Endothelial cell of umbilical vein (primary cell): ENCODE measurements at regions of chr2 and their contacts with region 1.

Region 1: DNA sequence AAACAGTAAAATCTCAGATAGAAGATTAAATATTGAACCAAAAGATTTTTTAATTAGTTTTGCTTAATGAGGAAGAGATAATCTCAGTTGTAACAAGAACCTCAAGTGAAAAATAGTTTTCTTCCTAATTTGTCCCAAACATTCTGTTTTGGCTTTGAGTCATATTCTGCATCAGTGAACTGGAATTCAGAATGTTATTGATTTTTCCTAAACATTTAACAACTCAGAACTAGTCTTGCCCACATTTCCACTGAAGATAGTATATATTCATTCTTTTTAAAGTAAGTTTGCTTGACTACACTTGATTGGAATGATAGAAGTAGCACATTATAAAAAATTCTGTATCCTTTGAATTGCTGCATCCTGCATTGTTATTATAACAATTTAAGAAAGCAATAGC is 85.7 kb upstream of the UGP2 start:
- DNase-seq: no peak
- H3K4me3 ChIP-seq: no peak overlapping the region
- H3K27ac ChIP-seq: no peak overlapping the region
- H3K4me1 ChIP-seq: no peaks in the 10 kb centered on the region
- H3K27me3 ChIP-seq: no peaks in the 10 kb centered on the region
- CTCF ChIP-seq: no peak
- POLR2A ChIP-seq: no peak

Region 2: DNA sequence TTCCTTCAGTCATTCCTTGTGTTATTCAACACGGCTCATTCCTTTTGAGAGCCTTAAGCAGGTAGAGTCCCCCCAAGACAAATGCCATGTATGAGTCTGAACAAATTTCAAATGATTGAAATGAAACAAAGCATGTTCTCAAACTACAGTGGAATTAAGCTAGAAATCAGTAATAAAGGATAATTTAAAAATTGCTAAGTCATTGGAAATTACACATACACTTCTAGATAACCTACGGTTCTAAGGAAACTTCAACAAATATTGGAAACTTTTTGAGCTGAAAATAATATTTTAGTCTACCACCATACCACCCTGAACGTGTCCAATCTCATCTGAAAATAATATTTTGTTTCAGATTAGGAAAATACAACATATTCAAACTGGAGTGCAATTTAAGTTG is 13.9 kb after region 1 on chr2:
- CTCF ChIA-PET with region 1: interaction called, 3 read pairs
- POLR2A ChIA-PET with region 1: no interaction called
- dilution Hi-C with region 1: no loop called
- intact Hi-C with region 1: loop called (anchors 1 kb)
- DNase-seq: no peak
- H3K4me3 ChIP-seq: no peak overlapping the region
- H3K27ac ChIP-seq: no peak overlapping the region
- H3K4me1 ChIP-seq: no peaks in the 10 kb centered on the region
- H3K27me3 ChIP-seq: no peaks in the 10 kb centered on the region
- CTCF ChIP-seq: no peak
- POLR2A ChIP-seq: no peak